Aorta (tissue), 5 donors: ENCODE measurements at regions of chr14 and their contacts with region 1.

Region 1: GRCh38 chr14:54175298-54175942 is 218.8 kb upstream of the BMP4 start:
- DNase-seq: peak in 1 of 2 donors; percentile 46
- ATAC-seq: peak; percentile 86
- H3K4me3 ChIP-seq: no peak overlapping the region
- H3K27ac ChIP-seq: no peak overlapping the region
- H3K4me1 ChIP-seq: peaks cover 3 to 7% of the 10 kb centered on the region in 2 donors
- H3K27me3 ChIP-seq: no peaks in the 10 kb centered on the region

Region 2: GRCh38 chr14:53539489-53540126 is 635.8 kb before region 1 on chr14:
- intact Hi-C with region 1: loop called (anchors 1 to 2 kb)
- DNase-seq: peak; percentile 79 to 82
- ATAC-seq: peak; percentile 87
- H3K4me3 ChIP-seq: no peak overlapping the region
- H3K27ac ChIP-seq: no peak overlapping the region
- H3K4me1 ChIP-seq: no peaks in the 10 kb centered on the region
- H3K27me3 ChIP-seq: no peaks in the 10 kb centered on the region

Region 3: DNA sequence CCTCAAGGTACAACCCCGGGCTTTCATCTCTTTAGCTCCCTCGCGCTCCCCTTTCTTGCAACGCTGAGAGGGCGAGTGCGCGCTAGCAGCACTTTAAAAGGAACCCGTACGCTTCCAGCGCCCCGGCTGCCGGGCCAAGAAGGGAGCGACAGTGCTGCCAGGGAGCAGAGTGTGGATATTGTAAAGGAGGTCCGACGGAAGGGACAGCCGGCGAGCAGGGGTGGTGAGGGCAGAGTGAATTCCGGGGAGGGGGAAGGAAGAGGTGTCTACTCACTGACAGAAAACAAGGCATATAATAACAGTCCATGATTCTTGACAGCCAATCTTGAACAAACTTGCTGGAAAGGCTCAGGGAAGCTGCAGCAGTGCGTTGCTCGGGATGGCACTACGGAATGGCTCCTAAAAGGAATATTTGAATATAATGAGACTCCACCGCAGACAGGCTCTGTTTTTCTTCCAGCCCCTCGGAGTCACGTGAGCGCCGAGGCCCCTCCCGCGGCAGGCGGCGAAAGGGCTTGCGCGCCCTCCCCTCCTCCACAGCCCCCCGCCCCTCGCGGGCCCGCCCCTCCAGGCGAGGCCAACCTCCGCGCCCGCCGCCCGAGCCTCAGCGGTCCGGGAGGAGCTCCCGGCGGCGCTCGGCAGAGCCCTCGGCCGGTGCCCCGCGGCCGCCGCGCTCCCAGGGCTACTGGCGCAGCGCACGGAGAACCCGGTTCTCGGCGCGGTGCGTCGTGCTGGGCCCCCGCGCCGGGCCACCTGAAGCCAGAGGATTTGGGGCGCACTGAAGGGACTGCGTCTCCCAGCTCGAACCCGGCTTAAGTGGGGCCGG is 222.2 kb before region 1 on chr14:
- intact Hi-C with region 1: loop called (anchors 5 to 10 kb)
- DNase-seq: peak; percentile 91 to 95
- ATAC-seq: peak; percentile 92
- H3K4me3 ChIP-seq: peak overlapping the region; percentile 55 to 72
- H3K27ac ChIP-seq: peak overlapping the region in 1 of 2 donors; percentile 69
- H3K4me1 ChIP-seq: no peaks in the 10 kb centered on the region
- H3K27me3 ChIP-seq: no peaks in the 10 kb centered on the region

Region 4: GRCh38 chr14:54108481-54109471 is 66.6 kb before region 1 on chr14:
- intact Hi-C with region 1: loop called in 1 of 2 experiments (anchors 5 kb)
- DNase-seq: no peak
- ATAC-seq: no peak
- H3K4me3 ChIP-seq: peak overlapping the region in 1 of 2 donors; percentile 10
- H3K27ac ChIP-seq: no peak overlapping the region
- H3K4me1 ChIP-seq: peaks cover 3 to 14% of the 10 kb centered on the region in 2 donors
- H3K27me3 ChIP-seq: no peaks in the 10 kb centered on the region

Region 5: GRCh38 chr14:54329082-54329695 is 153.8 kb after region 1 on chr14:
- intact Hi-C with region 1: loop called in 1 of 2 experiments (anchors 5 kb)
- DNase-seq: no peak
- ATAC-seq: peak; percentile 85
- H3K4me3 ChIP-seq: no peak overlapping the region
- H3K27ac ChIP-seq: no peak overlapping the region
- H3K4me1 ChIP-seq: no peaks in the 10 kb centered on the region
- H3K27me3 ChIP-seq: no peaks in the 10 kb centered on the region

Region 6: GRCh38 chr14:54347997-54348611 is 172.7 kb after region 1 on chr14:
- intact Hi-C with region 1: loop called in 1 of 2 experiments (anchors 10 kb)
- DNase-seq: no peak
- ATAC-seq: peak; percentile 75
- H3K4me3 ChIP-seq: no peak overlapping the region
- H3K27ac ChIP-seq: no peak overlapping the region
- H3K4me1 ChIP-seq: peaks cover 0 to 6% of the 10 kb centered on the region in 2 donors
- H3K27me3 ChIP-seq: no peaks in the 10 kb centered on the region